CD8-positive, alpha-beta T cell (primary cell): ENCODE measurements at regions of chr19 and their contacts with region 1.

Region 1: DNA sequence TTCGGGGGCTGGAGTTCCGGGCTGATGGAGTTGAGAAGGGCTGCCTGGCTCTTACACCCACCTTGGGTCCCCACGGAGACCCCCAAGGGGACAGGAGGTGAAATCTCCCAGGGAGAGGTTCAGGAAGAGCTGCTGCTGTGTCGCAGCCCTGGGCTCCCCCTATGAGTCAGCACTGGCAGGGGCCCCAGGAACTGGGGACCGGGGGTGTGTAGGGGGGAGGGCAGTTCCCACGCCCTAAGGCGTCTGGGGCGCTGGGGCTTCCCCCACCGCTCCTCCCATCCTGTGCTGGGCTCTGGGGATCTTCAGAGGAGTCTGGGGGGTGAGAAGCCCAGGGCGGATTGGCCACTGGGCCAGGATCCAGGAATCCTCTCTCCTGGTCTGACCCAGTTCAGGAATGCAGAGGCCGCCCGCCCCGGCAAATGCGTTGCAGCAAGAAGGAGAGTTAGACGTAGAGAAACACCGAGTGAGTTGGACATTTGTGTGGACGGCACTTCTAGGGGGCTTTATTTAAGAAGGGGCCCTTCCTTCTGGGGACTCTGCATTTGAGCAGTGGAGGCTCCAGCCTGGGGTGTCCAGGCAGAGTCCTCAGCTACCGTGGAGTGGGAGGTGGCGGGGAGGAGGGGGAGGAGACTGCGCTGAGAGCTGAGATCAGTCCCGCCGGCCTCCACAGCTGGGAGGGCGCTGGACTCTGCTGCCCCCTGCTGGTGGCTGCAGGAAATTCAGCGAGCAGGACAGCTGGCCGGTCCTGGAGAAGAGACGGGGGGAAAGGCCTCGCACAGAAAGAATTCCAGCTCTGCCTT is 15.0 kb upstream of the NANOS3 start:
- DNase-seq: peak; percentile 81 to 95 (median 89)
- ATAC-seq: peak; percentile 84
- H3K4me3 ChIP-seq: peak overlapping the region; percentile 74 to 75
- H3K4me3 Mint-ChIP-seq: peak overlapping the region; percentile 92
- H3K27ac ChIP-seq: peak overlapping the region; percentile 71 to 98
- H3K27ac Mint-ChIP-seq: peak overlapping the region; percentile 96
- H3K4me1 ChIP-seq: peaks cover 31% of the 10 kb centered on the region
- H3K4me1 Mint-ChIP-seq: peaks cover 30% of the 10 kb centered on the region
- H3K27me3 ChIP-seq: peaks cover 7 to 21% of the 10 kb centered on the region in 2 experiments
- H3K27me3 Mint-ChIP-seq: peaks cover 16% of the 10 kb centered on the region
- CTCF ChIP-seq: peak; percentile 99

Region 2: DNA sequence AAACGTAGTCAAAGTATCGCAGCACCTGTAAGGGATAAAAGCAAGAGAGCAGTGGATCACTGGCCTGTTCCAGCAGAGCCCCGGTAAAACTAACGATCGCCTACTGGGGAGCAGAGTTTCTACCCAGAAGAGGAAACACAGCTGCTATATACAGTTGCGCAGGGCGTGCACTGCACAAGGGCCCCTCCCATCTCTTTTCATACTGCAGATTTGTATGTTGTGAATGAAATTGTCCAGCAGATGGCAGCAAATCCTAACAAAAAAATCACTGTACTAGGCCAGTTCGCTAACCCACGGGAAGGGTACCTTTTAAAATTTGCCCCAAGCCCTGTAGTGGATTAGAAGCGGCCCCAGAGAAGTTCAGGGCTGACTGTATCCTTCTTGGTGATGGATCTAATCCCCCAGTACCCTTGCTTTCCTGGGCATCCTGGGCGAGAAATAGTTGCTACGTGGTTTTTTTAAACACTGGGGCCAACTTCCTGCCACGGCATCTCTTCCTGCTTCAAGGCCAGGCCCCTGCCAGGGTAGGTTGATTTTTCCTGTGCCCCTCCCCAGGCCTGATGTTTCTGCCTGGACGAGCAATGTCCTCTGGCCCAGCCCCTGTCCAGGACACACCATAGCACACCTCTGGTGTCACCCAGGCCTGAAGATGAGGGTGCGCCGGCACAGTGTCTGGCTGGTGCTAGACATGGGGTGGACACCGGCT is 584.7 kb before region 1 on chr19:
- CTCF ChIA-PET with region 1: interaction called, 7 read pairs
- POLR2A ChIA-PET with region 1: no interaction called
- intact Hi-C with region 1: loop called in 1 of 2 experiments (anchors 5 kb)
- DNase-seq: peak; percentile 26 to 88 (median 59)
- ATAC-seq: peak; percentile 89
- H3K4me3 ChIP-seq: peak overlapping the region; percentile 23 to 31
- H3K4me3 Mint-ChIP-seq: peak overlapping the region; percentile 48
- H3K27ac ChIP-seq: peak overlapping the region in 1 of 2 experiments; percentile 75
- H3K27ac Mint-ChIP-seq: peak overlapping the region; percentile 84
- H3K4me1 ChIP-seq: peaks cover 7% of the 10 kb centered on the region
- H3K4me1 Mint-ChIP-seq: peaks cover 17% of the 10 kb centered on the region
- H3K27me3 ChIP-seq: no peaks in the 10 kb centered on the region
- H3K27me3 Mint-ChIP-seq: peaks cover 8% of the 10 kb centered on the region
- CTCF ChIP-seq: peak; percentile 77

Region 3: DNA sequence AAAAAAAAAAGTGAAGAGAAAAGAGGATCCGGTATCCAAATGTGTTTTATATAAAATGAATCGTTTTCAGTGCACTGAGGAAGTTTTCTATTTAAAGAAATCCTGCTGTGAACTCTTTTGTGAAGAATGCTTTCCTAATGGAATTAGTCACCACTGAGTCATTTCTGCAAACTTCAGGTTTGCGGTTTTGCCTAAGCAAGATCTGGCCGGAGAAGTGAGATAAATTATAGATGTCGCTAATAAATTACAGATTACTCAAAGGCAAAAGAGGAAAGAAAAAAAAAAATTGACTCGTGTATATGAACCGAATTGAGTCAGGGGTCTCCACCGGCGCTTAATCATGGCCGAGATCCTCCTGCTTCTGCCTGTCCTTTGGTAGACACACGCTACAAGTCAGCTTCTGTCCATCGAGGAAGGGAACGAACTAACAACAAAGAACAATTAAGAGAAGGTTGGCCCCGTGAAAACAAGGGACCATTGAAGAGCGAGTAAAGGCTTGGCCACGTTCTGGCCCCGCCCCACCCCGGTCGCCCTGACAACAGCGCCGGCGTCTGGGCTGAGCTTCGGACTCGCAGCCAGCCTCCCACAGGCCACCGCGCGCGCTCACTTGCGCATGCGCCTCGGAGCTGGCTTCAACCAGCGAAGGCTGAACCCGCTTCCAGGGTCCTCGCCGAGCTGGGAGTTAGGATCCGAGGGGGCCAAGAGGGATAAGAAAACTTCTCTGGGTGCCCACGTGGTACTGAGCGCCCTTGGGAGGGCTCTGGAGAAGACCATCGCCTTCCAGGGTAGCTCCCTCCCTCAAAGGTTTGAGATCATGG is 130.6 kb before region 1 on chr19:
- CTCF ChIA-PET with region 1: interaction called, 3 read pairs
- POLR2A ChIA-PET with region 1: no interaction called
- intact Hi-C with region 1: loop called (anchors 1 to 2 kb)
- DNase-seq: peak; percentile 87 to 97 (median 93)
- ATAC-seq: peak; percentile 100
- H3K4me3 ChIP-seq: peak overlapping the region; percentile 59 to 87
- H3K4me3 Mint-ChIP-seq: peak overlapping the region; percentile 90
- H3K27ac ChIP-seq: peak overlapping the region; percentile 57 to 59
- H3K27ac Mint-ChIP-seq: peak overlapping the region; percentile 74
- H3K4me1 ChIP-seq: peaks cover 7% of the 10 kb centered on the region
- H3K4me1 Mint-ChIP-seq: peaks cover 8% of the 10 kb centered on the region
- H3K27me3 ChIP-seq: no peaks in the 10 kb centered on the region
- H3K27me3 Mint-ChIP-seq: no peaks in the 10 kb centered on the region
- CTCF ChIP-seq: no peak

Region 4: GRCh38 chr19:13784731-13785452 is 77.0 kb before region 1 on chr19:
- CTCF ChIA-PET with region 1: interaction called, 263 read pairs
- POLR2A ChIA-PET with region 1: interaction called, 24 read pairs
- intact Hi-C with region 1: loop called (anchors 1 kb)
- DNase-seq: peak; percentile 44 to 86 (median 78)
- ATAC-seq: peak; percentile 65
- H3K4me3 ChIP-seq: no peak overlapping the region
- H3K4me3 Mint-ChIP-seq: peak overlapping the region; percentile 45
- H3K27ac ChIP-seq: no peak overlapping the region
- H3K27ac Mint-ChIP-seq: peak overlapping the region; percentile 63
- H3K4me1 ChIP-seq: peaks cover 35% of the 10 kb centered on the region
- H3K4me1 Mint-ChIP-seq: peaks cover 31% of the 10 kb centered on the region
- H3K27me3 ChIP-seq: no peaks in the 10 kb centered on the region
- H3K27me3 Mint-ChIP-seq: no peaks in the 10 kb centered on the region
- CTCF ChIP-seq: peak; percentile 73

Region 5: GRCh38 chr19:13808856-13809255 is 53.1 kb before region 1 on chr19:
- CTCF ChIA-PET with region 1: interaction called, 10 read pairs
- POLR2A ChIA-PET with region 1: interaction called, 3 read pairs
- intact Hi-C with region 1: no loop called
- DNase-seq: no peak
- ATAC-seq: no peak
- H3K4me3 ChIP-seq: no peak overlapping the region
- H3K4me3 Mint-ChIP-seq: no peak overlapping the region
- H3K27ac ChIP-seq: no peak overlapping the region
- H3K27ac Mint-ChIP-seq: no peak overlapping the region
- H3K4me1 ChIP-seq: no peaks in the 10 kb centered on the region
- H3K4me1 Mint-ChIP-seq: no peaks in the 10 kb centered on the region
- H3K27me3 ChIP-seq: no peaks in the 10 kb centered on the region
- H3K27me3 Mint-ChIP-seq: no peaks in the 10 kb centered on the region
- CTCF ChIP-seq: no peak

Region 6: GRCh38 chr19:13833330-13834243 is 28.3 kb before region 1 on chr19:
- CTCF ChIA-PET with region 1: interaction called, 33 read pairs
- POLR2A ChIA-PET with region 1: interaction called, 14 read pairs
- intact Hi-C with region 1: loop called (anchors 1 to 2 kb)
- DNase-seq: peak; percentile 83 to 97 (median 93)
- ATAC-seq: peak; percentile 84
- H3K4me3 ChIP-seq: peak overlapping the region; percentile 64 to 82
- H3K4me3 Mint-ChIP-seq: peak overlapping the region; percentile 86
- H3K27ac ChIP-seq: peak overlapping the region; percentile 53 to 80
- H3K27ac Mint-ChIP-seq: peak overlapping the region; percentile 86
- H3K4me1 ChIP-seq: peaks cover 44% of the 10 kb centered on the region
- H3K4me1 Mint-ChIP-seq: peaks cover 38% of the 10 kb centered on the region
- H3K27me3 ChIP-seq: no peaks in the 10 kb centered on the region
- H3K27me3 Mint-ChIP-seq: no peaks in the 10 kb centered on the region
- CTCF ChIP-seq: peak; percentile 72

Region 7: DNA sequence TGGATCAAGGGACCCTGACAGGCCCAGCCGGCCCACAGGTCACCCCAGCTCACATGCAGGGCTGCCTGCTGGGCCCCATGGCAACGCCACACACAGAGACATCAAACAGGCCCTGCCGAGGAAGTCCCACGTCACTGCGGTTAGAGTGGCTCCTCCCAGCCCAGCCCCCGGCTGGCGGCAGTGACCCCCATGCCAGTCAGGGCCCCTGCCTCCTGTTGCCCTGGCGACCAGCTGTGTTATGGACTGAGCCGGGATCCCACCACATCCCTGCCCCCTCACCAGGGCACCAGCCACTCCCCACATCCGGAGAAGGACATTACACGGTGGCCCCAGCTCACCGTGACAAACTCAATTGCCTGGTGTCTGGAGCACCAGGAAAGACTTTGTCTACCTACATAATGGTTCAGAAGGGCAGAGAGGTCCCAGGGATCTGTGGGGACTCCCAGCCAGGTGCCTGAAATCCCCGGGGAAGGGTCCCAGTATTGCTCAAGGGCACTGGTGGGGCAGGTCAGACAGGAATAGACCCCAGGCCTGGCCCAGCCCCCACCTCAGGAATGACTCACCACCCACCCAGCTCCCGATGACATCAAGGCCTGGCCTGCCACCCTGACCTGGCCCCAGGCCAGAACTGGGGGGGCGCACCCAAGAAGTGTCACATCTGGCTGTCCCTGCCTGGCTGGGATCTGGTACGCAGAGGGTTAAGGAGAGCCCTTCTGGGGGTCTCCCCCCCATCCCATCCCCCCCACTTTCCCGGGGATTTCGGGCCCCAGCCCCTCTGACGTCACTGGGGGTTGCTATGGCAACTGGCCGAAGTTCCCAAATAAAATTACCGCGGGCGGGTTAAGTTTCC is 15.2 kb before region 1 on chr19:
- CTCF ChIA-PET with region 1: interaction called, 32 read pairs
- POLR2A ChIA-PET with region 1: interaction called, 9 read pairs
- intact Hi-C with region 1: loop called (anchors 1 kb)
- DNase-seq: peak; percentile 90 to 99 (median 97)
- ATAC-seq: peak; percentile 54
- H3K4me3 ChIP-seq: peak overlapping the region; percentile 55 to 68
- H3K4me3 Mint-ChIP-seq: peak overlapping the region; percentile 89
- H3K27ac ChIP-seq: peak overlapping the region; percentile 98 to 99
- H3K27ac Mint-ChIP-seq: peak overlapping the region; percentile 100
- H3K4me1 ChIP-seq: peaks cover 65% of the 10 kb centered on the region
- H3K4me1 Mint-ChIP-seq: peaks cover 56% of the 10 kb centered on the region
- H3K27me3 ChIP-seq: no peaks in the 10 kb centered on the region
- H3K27me3 Mint-ChIP-seq: no peaks in the 10 kb centered on the region
- CTCF ChIP-seq: no peak

Region 8: DNA sequence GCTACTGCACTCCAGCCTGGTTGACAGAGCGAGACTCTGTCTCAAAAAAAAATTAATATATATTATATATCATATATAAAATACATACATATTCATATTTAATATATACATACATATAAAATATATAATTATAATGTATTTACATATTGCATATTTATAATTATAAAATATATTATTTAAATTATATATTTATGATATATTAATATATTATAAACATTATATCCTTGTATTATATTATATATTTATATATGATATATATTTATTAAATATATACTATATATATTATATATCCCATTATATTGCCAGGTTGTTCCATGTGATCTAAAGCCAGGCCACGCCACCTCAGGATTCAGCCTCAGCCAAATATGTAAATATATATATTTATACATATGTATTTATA is 34.3 kb after region 1 on chr19:
- CTCF ChIA-PET with region 1: no interaction called
- POLR2A ChIA-PET with region 1: no interaction called
- intact Hi-C with region 1: no loop called
- DNase-seq: no peak
- ATAC-seq: no peak
- H3K4me3 ChIP-seq: no peak overlapping the region
- H3K4me3 Mint-ChIP-seq: no peak overlapping the region
- H3K27ac ChIP-seq: no peak overlapping the region
- H3K27ac Mint-ChIP-seq: no peak overlapping the region
- H3K4me1 ChIP-seq: no peaks in the 10 kb centered on the region
- H3K4me1 Mint-ChIP-seq: no peaks in the 10 kb centered on the region
- H3K27me3 ChIP-seq: no peaks in the 10 kb centered on the region
- H3K27me3 Mint-ChIP-seq: no peaks in the 10 kb centered on the region
- CTCF ChIP-seq: no peak